Activated naive CD4-positive, alpha-beta T cell treated with anti-CD3 and anti-CD28 coated beads for 36 hours (primary cell): ENCODE measurements at regions of chr3 and their contacts with region 1.

Region 1: DNA sequence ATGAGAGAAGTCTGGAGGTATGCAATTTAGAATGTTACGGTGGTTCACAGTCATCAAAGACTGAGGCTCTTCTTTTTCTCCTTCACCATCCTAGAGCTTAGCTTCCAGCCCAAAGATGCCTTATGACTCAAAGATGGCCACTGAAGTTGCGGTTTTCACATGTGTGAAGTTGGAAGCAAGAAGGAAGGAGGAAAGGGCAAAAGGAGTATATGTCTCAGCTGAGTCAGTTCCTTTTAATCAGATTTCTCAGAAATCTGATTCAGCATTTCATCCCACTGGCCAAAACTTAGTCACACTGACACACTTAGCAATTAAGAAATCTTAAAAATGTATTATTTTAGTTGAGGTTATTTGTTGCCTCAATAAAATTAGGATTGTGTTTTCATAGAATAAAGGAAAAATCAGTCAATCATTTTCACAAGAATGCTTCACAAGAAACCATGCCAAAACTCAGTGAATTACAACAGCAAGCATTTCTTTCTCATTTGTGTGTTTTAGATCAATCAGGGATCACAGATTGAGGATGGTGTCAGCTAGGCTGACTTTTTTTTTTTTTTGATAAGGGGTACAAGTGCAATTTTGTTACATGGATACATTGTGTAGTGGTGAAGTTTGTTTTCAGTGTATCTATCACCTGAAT is 211.1 kb upstream of the GADL1 start:
- DNase-seq: no peak
- H3K4me3 Mint-ChIP-seq: no peak overlapping the region
- H3K27ac Mint-ChIP-seq: no peak overlapping the region
- H3K4me1 Mint-ChIP-seq: peaks cover 21% of the 10 kb centered on the region
- H3K27me3 Mint-ChIP-seq: peaks cover 2% of the 10 kb centered on the region

Region 2: DNA sequence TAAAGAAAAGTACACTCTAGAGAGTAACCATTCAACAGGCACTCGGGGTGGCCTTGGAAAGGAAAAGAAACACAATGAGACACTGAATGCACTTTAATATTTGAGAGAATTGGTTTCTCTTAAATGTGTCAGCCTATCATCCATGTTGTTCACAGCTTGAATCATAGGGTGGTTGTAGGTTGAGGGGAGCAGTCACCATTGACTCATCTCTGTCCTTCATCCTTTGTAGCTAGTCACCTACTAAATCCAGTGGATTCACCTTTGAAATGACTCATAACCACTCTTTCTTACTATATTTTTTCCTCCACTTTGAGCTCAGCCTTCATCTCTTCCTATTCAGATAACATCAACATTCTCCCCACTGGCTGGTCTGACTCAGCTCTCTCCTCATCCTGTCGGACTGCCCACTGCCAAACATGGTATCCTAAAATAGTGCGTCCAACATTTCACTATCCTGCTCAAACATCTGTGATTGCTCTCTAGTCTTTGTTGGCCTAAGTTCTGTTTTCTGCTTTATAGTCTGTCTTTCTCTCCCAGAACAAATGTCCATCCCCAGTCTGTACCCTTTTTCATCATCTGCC is 28.4 kb before region 1 on chr3:
- CTCF ChIA-PET with region 1: no interaction called
- intact Hi-C with region 1: loop called (anchors 1 kb)
- DNase-seq: peak; percentile 72
- H3K4me3 Mint-ChIP-seq: no peak overlapping the region
- H3K27ac Mint-ChIP-seq: peak overlapping the region; percentile 4
- H3K4me1 Mint-ChIP-seq: peaks cover 18% of the 10 kb centered on the region
- H3K27me3 Mint-ChIP-seq: no peaks in the 10 kb centered on the region

Region 3: GRCh38 chr3:31092748-31093551 is 12.6 kb before region 1 on chr3:
- CTCF ChIA-PET with region 1: no interaction called
- intact Hi-C with region 1: no loop called
- DNase-seq: no peak
- H3K4me3 Mint-ChIP-seq: no peak overlapping the region
- H3K27ac Mint-ChIP-seq: no peak overlapping the region
- H3K4me1 Mint-ChIP-seq: peaks cover 11% of the 10 kb centered on the region
- H3K27me3 Mint-ChIP-seq: no peaks in the 10 kb centered on the region